HEK293 (cell line): ENCODE measurements at regions of chr7 and their contacts with region 1.

Region 1: DNA sequence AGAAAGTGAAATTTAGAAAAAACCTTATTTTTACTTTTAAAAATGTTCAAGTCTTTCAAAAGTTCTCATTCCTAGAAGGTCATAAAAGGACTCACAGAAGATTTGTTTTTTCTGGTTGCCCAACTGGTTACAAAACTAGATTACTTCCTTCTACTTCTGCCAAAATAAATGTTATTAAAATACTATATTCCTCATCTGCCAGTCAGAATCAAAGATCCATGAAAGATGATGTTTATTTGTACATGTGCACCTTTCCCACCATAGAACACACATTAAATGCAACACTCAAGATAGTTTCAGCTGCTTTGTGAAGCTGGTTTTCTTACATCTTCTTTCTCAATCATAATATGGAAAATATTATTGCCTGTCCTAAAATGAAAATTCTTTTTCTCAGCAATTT is 465.4 kb downstream of the ETV1 start:
- H3K4me3 ChIP-seq: no peak overlapping the region
- H3K27ac ChIP-seq: no peak overlapping the region
- H3K4me1 ChIP-seq: peaks cover 5% of the 10 kb centered on the region
- CTCF ChIP-seq: no peak

Region 2: GRCh38 chr7:13540429-13540828 is 16.4 kb after region 1 on chr7:
- CTCF ChIA-PET with region 1: interaction called, 18 read pairs
- POLR2A ChIA-PET with region 1: no interaction called
- H3K4me3 ChIP-seq: no peak overlapping the region
- H3K27ac ChIP-seq: no peak overlapping the region
- H3K4me1 ChIP-seq: no peaks in the 10 kb centered on the region
- CTCF ChIP-seq: no peak

Region 3: GRCh38 chr7:13551503-13551902 is 27.4 kb after region 1 on chr7:
- CTCF ChIA-PET with region 1: no interaction called
- POLR2A ChIA-PET with region 1: no interaction called
- H3K4me3 ChIP-seq: no peak overlapping the region
- H3K27ac ChIP-seq: no peak overlapping the region
- H3K4me1 ChIP-seq: 0 out of 2 replicates have a peak, but pooled peaks cover 3% of the 10 kb centered on the region
- CTCF ChIP-seq: no peak